Activated CD8-positive, alpha-beta T cell treated with anti-CD3 and anti-CD28 coated beads for 36 hours (primary cell): ENCODE measurements at regions of chr7 and their contacts with region 1.

Region 1: GRCh38 chr7:129271500-129272355 is 46.9 kb downstream of the AHCYL2 start:
- DNase-seq: peak; percentile 80
- ATAC-seq: peak; percentile 100
- H3K4me3 Mint-ChIP-seq: peak overlapping the region; percentile 64
- H3K27ac Mint-ChIP-seq: peak overlapping the region; percentile 76
- H3K4me1 Mint-ChIP-seq: peaks cover 14% of the 10 kb centered on the region
- H3K27me3 Mint-ChIP-seq: no peaks in the 10 kb centered on the region
- CTCF ChIP-seq: peak; percentile 81

Region 2: GRCh38 chr7:129091484-129092002 is 180.2 kb before region 1 on chr7:
- CTCF ChIA-PET with region 1: no interaction called
- POLR2A ChIA-PET with region 1: no interaction called
- intact Hi-C with region 1: no loop called
- DNase-seq: peak; percentile 94
- ATAC-seq: peak; percentile 92
- H3K4me3 Mint-ChIP-seq: no peak overlapping the region
- H3K27ac Mint-ChIP-seq: peak overlapping the region; percentile 73
- H3K4me1 Mint-ChIP-seq: peaks cover 19% of the 10 kb centered on the region
- H3K27me3 Mint-ChIP-seq: peaks cover 1% of the 10 kb centered on the region
- CTCF ChIP-seq: peak; percentile 96

Region 3: DNA sequence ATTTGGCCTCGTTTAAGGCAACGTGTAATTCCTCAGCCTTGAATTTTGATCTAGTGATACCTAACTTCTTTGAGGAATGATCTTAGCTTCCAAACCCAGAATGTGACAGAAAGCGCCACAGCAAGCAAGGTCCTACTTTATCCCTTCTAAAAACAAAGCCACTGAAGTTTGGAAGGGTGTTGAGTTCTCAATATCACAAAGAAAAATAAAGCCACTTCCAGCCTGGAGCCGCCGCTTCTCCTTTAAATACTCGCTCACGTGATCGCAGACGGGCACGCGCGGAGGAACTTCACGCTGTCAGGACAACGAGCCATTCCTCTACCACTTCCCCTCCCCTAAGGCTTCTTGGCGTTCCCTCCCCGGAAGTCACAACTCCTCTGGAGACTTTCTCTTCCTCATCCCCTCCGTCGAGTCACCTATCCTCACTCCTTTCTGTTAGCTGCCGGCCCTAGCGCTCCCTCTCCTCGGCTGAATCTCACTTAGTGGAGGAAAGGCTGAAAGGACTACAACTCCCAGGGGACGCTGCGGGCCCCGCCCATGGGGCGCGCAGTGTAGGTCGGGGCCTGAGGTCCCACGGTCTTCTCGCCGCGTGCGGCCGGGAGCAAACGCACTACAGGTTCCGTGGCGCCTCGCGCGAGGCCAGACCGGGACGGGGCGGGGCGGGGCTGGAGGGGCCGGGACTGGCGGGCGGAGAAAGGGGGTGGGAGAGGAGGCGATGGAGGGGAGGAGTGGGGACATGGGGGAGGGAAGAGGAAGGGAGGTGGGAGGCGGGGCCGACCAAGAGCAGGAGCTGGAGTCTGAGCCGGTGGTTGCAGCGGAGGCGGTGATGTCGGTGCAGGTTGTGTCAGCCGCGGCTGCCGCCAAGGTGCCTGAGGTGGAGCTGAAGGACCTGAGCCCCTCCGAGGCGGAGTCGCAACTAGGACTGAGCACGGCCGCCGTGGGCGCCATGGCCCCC is 47.2 kb before region 1 on chr7 and contains the start of gene AHCYL2:
- CTCF ChIA-PET with region 1: interaction called, 320 read pairs
- POLR2A ChIA-PET with region 1: interaction called, 5 read pairs
- intact Hi-C with region 1: no loop called
- DNase-seq: peak; percentile 98
- ATAC-seq: peak; percentile 93
- H3K4me3 Mint-ChIP-seq: peak within 1 kb of the TSS; percentile 79
- H3K27ac Mint-ChIP-seq: peak within 1 kb of the TSS; percentile 91
- H3K4me1 Mint-ChIP-seq: peaks cover 25% of the 10 kb centered on the region
- H3K27me3 Mint-ChIP-seq: no peaks in the 10 kb centered on the region
- CTCF ChIP-seq: no peak
- total RNA-seq, gene AHCYL2: 8.1 to 9.6 TPM

Region 4: DNA sequence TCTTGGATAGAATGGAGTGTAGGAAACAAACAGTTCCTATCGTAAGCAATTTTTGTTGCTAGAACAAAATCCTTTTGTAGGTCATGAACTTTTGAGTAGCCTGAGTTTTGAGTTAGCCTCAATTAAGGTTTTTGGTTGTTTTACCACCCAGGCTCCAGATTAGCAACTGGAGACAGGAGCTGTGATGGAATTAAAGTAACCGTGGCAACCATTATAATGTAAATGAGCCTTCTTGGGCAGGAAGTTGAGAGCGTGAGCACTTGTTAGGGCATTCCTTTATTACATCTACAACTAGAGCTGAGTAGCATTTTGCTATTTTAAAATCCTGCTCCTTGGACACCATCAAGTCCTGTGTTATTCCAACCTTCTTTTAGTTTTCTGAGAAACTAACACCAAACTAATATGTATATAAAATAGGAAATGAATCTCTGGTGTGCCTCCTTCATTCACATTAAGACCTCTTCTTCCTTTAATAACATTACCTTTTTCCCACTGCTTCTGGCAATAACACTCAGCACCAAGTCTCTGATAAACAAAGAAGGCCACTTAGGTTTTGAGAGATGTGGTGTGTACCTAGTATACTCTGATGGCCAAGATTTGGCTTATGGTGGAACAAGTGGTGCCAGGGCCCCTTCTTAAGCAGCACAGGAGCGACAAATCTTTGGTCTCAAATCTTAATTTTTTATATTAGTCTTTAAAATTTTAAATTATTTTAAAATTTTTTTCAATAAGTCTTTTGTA is 12.9 kb before region 1 on chr7:
- CTCF ChIA-PET with region 1: interaction called, 51 read pairs
- POLR2A ChIA-PET with region 1: no interaction called
- intact Hi-C with region 1: no loop called
- DNase-seq: no peak
- ATAC-seq: no peak
- H3K4me3 Mint-ChIP-seq: no peak overlapping the region
- H3K27ac Mint-ChIP-seq: peak overlapping the region; percentile 39
- H3K4me1 Mint-ChIP-seq: peaks cover 16% of the 10 kb centered on the region
- H3K27me3 Mint-ChIP-seq: no peaks in the 10 kb centered on the region
- CTCF ChIP-seq: no peak

Region 5: DNA sequence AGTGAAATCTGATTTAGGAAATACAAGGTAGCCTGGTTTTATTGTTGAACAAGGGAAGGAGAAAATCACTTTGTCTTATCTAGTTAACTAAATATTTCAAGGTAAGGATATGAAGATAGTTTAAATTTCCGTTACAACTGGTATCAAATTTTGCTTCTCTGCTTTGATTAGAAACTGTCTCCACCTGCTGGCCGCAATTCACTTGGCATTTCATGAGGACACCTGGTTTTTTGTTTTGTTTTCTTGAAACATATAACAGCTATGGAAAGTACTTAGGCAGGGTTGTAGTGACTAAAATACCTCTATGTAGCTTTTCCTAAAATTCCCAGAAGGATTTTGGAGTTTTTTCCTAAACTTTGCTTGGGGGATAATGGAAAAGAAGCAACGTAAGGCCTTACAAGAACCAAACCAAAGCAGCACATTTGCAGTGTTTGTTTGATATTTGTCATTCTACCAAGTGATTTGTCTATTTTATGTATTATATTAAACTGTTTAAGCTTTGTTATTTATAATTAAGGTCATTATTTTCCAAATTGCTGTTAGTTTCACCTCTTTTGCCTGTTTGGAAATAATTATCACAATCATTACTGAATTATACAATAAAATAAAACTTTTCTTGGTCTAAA is 26.7 kb after region 1 on chr7:
- CTCF ChIA-PET with region 1: interaction called, 20 read pairs
- POLR2A ChIA-PET with region 1: no interaction called
- intact Hi-C with region 1: no loop called
- DNase-seq: peak; percentile 79
- ATAC-seq: no peak
- H3K4me3 Mint-ChIP-seq: no peak overlapping the region
- H3K27ac Mint-ChIP-seq: no peak overlapping the region
- H3K4me1 Mint-ChIP-seq: no peaks in the 10 kb centered on the region
- H3K27me3 Mint-ChIP-seq: no peaks in the 10 kb centered on the region
- CTCF ChIP-seq: peak; percentile 82

Region 6: DNA sequence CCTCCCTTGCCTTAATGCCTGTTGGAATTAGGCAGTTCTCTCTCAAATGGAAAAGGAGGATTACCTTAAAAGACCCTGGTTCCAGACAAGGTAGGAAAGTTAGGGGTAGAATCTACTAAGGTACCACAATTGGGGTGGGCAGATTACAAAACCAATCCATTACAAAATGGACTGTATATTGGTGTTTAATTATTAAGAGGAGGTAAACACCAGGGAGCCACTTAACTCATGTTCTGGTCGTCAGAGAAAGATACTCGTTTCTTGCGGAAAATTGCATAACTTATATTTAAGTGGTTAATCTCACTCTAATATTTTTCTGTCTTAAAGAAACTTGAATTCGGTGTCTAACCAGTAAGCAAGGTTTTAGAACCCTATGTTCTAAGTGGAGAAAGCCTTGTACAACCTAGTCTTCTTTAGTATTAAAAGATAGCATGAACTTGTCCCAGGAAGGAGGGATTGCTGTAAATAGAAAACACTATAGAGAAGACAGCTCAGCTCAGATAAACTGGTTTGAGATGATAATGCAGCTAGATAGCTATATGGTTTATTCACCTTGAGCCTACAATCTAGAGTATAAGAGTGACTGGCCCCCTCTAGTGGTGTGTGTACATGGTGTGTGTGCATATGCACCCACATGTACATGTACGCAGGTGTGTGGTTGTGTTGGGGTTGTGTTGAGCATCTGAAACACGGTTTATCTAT is 104.5 kb after region 1 on chr7:
- CTCF ChIA-PET with region 1: interaction called, 11 read pairs
- POLR2A ChIA-PET with region 1: no interaction called
- intact Hi-C with region 1: no loop called
- DNase-seq: peak; percentile 80
- ATAC-seq: peak; percentile 78
- H3K4me3 Mint-ChIP-seq: no peak overlapping the region
- H3K27ac Mint-ChIP-seq: no peak overlapping the region
- H3K4me1 Mint-ChIP-seq: peaks cover 22% of the 10 kb centered on the region
- H3K27me3 Mint-ChIP-seq: no peaks in the 10 kb centered on the region
- CTCF ChIP-seq: peak; percentile 73

Region 7: DNA sequence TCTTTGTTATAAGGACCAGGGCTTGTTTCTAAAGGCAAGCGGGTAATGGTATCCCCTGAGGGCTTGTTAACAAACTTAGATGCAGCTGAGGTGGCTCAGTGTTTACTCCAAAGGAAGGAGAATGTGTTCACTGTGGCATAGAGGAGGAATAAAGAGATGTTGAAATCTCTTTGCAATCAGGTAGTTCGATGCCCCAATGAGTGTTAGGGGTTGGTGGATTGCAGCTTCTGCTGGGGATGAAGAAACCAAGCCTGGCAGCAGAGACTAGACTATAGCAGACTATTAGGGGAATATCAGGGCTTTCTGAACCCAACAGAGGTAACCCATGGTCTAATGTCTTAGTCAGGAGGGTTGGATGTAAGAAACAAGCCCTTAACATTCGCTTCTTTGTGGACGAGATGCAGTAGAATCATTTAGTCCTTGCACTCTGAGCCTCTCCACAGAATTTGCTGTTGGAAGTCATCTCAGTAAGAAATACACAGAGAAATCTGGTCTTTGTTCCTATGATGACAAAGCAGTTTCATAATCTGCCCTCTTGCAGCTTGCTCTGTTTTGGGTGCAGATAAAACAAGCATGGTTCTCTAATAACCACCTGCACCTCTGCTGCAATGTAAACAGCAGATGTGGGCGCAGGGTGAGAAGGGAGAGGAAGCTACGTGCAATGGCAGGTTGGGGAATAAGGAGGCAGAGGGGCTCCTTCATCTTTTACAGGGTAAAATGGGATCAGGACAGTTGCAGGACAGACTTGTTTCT is 448.4 kb after region 1 on chr7:
- CTCF ChIA-PET with region 1: no interaction called
- POLR2A ChIA-PET with region 1: no interaction called
- intact Hi-C with region 1: no loop called
- DNase-seq: no peak
- ATAC-seq: no peak
- H3K4me3 Mint-ChIP-seq: no peak overlapping the region
- H3K27ac Mint-ChIP-seq: no peak overlapping the region
- H3K4me1 Mint-ChIP-seq: peaks cover 4% of the 10 kb centered on the region
- H3K27me3 Mint-ChIP-seq: no peaks in the 10 kb centered on the region
- CTCF ChIP-seq: no peak